ENCODE measurements at regions of chr17 and their contacts with region 1.

Region 1: DNA sequence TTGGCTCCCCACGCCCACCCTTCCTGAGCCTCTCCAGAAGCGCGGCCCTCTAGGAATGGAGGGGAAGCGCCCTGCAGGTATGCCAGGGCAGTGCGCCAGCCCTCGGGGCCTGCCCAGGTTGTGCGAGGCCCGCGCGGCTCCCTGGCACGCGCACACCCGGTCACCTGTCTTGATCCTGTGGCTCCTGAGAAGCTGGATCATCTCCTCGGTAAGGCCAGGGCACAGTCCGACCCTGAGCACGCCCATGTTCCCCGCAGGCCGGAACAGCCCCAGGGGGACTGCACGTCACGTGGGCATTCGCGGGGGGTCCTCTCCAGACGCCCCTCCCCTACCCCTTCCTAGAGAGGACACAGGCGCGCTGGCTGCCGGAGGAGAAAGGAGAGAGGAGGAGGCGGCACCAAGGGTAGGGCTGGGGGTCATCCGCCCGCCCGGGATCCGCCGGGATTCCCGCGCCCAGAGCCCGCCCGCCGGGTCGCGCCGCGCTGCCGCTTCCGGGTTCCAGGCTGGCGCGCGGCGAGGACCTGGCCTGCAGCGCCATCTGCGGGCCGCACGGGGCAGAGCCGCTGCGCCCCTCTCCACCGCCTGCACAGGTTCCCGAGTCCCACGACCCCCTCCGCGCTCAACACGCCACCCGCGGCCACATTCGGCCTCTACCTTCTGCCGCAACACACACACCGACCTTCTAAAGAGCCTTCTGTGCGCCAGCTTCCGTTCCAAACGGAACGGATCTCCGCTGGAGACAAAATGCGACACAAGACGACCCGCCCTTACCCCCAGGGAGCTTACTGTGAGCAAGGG is at the start of gene RAD51D:
- DNase-seq: peak; percentile 83
- ATAC-seq: peak; percentile 90
- H3K4me3 Mint-ChIP-seq: peak within 1 kb of the TSS; percentile 87
- H3K27ac Mint-ChIP-seq: peak within 1 kb of the TSS; percentile 91
- H3K4me1 Mint-ChIP-seq: peaks cover 25% of the 10 kb centered on the region
- H3K27me3 Mint-ChIP-seq: no peaks in the 10 kb centered on the region
- CTCF ChIP-seq: peak; percentile 91
- total RNA-seq, gene RAD51D: 32.4 to 36.2 TPM

Region 2: DNA sequence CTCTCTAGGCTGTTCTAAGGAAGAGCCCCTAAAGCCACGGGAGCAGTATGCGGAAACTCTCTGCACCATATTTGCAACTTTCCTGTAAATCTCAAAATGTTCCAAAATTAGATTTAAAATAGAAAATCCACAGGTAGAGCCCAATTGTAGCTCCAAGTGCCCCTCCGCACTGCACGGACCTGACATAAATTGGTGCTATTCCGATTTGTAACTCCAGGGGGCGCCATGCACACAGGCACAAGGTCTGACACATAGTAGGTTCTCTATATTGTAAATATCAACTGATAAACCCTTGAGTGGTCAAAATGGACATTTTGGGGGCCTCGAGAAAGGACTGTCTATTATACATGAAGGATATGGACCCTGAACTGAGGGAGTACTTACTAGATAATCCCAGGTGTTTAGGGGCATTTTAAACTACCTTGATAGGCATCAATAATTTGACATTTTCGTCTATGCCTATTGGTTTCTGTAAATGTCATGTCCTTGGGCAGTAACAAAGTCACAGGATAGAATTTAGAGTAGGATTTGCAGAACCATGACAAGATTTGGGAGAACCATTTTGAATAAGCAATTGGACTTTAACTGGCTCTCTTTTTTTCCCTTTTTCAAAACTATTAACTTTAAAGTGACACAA is 576.7 kb before region 1 on chr17:
- CTCF ChIA-PET with region 1: interaction called, 8 read pairs
- POLR2A ChIA-PET with region 1: interaction called, 3 read pairs
- intact Hi-C with region 1: loop called (anchors 5 kb)
- DNase-seq: peak; percentile 73
- ATAC-seq: peak; percentile 66
- H3K4me3 Mint-ChIP-seq: no peak overlapping the region
- H3K27ac Mint-ChIP-seq: no peak overlapping the region
- H3K4me1 Mint-ChIP-seq: no peaks in the 10 kb centered on the region
- H3K27me3 Mint-ChIP-seq: peaks cover 22% of the 10 kb centered on the region
- CTCF ChIP-seq: peak; percentile 99

Region 3: DNA sequence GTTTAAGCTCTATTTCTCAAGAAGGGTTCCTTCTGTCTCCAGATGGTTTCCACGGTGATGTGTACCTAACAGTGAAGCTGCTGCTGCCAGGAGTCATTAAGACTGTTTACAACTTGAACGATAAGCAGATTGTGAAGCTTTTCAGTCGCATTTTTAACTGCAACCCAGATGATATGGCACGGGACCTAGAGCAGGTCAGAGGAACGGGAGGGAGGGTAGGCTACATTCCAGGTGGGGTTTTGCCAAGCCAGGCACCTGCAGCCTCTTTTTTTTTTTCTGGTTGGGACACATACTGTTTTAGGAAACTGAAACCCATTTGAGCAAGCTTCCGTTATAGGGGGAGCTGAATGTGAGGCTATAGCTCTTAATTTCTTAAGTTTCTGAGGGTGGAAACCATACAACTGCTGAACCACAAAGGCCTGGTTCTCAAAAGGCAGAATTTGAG is 128.6 kb before region 1 on chr17:
- CTCF ChIA-PET with region 1: interaction called, 59 read pairs
- POLR2A ChIA-PET with region 1: interaction called, 33 read pairs
- intact Hi-C with region 1: loop called (anchors 5 kb)
- DNase-seq: no peak
- ATAC-seq: no peak
- H3K4me3 Mint-ChIP-seq: no peak overlapping the region
- H3K27ac Mint-ChIP-seq: peak overlapping the region; percentile 62
- H3K4me1 Mint-ChIP-seq: peaks cover 3% of the 10 kb centered on the region
- H3K27me3 Mint-ChIP-seq: no peaks in the 10 kb centered on the region
- CTCF ChIP-seq: no peak

Region 4: GRCh38 chr17:35011671-35012210 is 107.8 kb before region 1 on chr17:
- CTCF ChIA-PET with region 1: interaction called, 13 read pairs
- POLR2A ChIA-PET with region 1: no interaction called
- intact Hi-C with region 1: no loop called
- DNase-seq: no peak
- ATAC-seq: no peak
- H3K4me3 Mint-ChIP-seq: no peak overlapping the region
- H3K27ac Mint-ChIP-seq: peak overlapping the region; percentile 4
- H3K4me1 Mint-ChIP-seq: no peaks in the 10 kb centered on the region
- H3K27me3 Mint-ChIP-seq: no peaks in the 10 kb centered on the region
- CTCF ChIP-seq: no peak

Region 5: DNA sequence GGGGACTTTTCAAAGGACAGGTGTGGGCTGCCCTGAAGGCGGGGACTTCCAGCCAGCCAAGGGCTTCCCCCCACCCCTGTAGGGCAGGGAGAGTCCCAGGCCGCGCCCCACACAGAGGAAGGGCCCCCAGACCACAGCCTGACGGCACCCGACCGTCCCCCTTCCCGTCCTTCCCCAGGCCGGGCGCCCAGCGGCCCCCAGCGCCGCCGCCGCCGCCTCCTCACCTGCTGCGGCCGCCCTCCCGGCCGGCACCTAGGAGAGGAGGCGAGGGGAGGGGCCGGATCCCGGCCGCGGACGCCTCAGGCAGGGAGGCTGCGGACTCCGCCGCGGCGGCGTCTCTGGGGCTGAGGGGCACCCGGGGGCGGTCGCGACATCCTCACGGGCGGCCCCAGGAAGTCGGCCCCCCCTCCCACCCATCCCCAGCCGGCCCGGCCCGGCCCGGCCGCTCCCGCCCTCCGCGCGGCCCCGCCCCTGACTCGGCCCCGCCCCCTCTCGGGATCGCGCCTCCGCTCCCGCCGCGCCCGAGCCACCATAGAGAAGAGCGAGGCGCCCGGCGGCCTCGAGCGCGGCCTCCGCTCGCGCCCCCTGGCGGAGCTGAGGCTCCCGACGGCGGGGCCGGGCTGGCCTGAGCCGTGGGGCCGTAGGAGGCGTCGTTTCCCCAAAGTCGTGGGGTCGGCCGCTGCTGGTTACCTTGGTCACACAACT is 30.5 kb before region 1 on chr17:
- CTCF ChIA-PET with region 1: interaction called, 36 read pairs
- POLR2A ChIA-PET with region 1: interaction called, 9 read pairs
- intact Hi-C with region 1: no loop called
- DNase-seq: peak; percentile 93
- ATAC-seq: peak; percentile 80
- H3K4me3 Mint-ChIP-seq: peak overlapping the region; percentile 90
- H3K27ac Mint-ChIP-seq: peak overlapping the region; percentile 94
- H3K4me1 Mint-ChIP-seq: peaks cover 41% of the 10 kb centered on the region
- H3K27me3 Mint-ChIP-seq: no peaks in the 10 kb centered on the region
- CTCF ChIP-seq: peak; percentile 67

Region 6: GRCh38 chr17:35103271-35103670 is 16.3 kb before region 1 on chr17:
- CTCF ChIA-PET with region 1: interaction called, 12 read pairs
- POLR2A ChIA-PET with region 1: interaction called, 4 read pairs
- intact Hi-C with region 1: no loop called
- DNase-seq: no peak
- ATAC-seq: no peak
- H3K4me3 Mint-ChIP-seq: no peak overlapping the region
- H3K27ac Mint-ChIP-seq: no peak overlapping the region
- H3K4me1 Mint-ChIP-seq: peaks cover 6% of the 10 kb centered on the region
- H3K27me3 Mint-ChIP-seq: no peaks in the 10 kb centered on the region
- CTCF ChIP-seq: no peak

Region 7: DNA sequence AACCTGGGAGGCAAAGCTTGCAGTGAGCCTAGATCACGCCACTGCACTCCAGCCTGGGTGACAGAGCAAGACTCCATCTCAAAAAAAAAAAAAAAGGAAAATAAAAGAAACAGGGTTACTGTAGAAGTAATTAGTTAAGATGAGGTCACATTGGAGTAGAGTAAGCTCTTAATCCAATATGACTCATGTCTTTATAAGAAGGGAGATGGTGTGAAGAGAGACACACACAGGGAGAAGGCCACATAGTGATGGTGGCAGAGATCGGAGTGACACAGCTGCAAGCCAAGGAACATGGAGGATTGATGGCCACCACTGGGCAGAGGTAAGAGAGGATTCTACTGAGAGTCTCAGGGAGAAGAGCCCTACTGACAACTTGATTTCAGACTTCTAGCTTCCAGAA is 108.0 kb after region 1 on chr17:
- CTCF ChIA-PET with region 1: no interaction called
- POLR2A ChIA-PET with region 1: no interaction called
- intact Hi-C with region 1: no loop called
- DNase-seq: no peak
- ATAC-seq: peak; percentile 50
- H3K4me3 Mint-ChIP-seq: no peak overlapping the region
- H3K27ac Mint-ChIP-seq: no peak overlapping the region
- H3K4me1 Mint-ChIP-seq: peaks cover 44% of the 10 kb centered on the region
- H3K27me3 Mint-ChIP-seq: no peaks in the 10 kb centered on the region
- CTCF ChIP-seq: no peak

Region 8: GRCh38 chr17:35299129-35299528 is 179.6 kb after region 1 on chr17:
- CTCF ChIA-PET with region 1: no interaction called
- POLR2A ChIA-PET with region 1: no interaction called
- intact Hi-C with region 1: no loop called
- DNase-seq: no peak
- ATAC-seq: no peak
- H3K4me3 Mint-ChIP-seq: no peak overlapping the region
- H3K27ac Mint-ChIP-seq: no peak overlapping the region
- H3K4me1 Mint-ChIP-seq: peaks cover 6% of the 10 kb centered on the region
- H3K27me3 Mint-ChIP-seq: peaks cover 1% of the 10 kb centered on the region
- CTCF ChIP-seq: no peak

Measured in activated CD8-positive, alpha-beta T cell treated with anti-CD3 and anti-CD28 coated beads for 36 hours (primary cell).